ENCODE measurements at regions of chr1 and their contacts with region 1.

Region 1: DNA sequence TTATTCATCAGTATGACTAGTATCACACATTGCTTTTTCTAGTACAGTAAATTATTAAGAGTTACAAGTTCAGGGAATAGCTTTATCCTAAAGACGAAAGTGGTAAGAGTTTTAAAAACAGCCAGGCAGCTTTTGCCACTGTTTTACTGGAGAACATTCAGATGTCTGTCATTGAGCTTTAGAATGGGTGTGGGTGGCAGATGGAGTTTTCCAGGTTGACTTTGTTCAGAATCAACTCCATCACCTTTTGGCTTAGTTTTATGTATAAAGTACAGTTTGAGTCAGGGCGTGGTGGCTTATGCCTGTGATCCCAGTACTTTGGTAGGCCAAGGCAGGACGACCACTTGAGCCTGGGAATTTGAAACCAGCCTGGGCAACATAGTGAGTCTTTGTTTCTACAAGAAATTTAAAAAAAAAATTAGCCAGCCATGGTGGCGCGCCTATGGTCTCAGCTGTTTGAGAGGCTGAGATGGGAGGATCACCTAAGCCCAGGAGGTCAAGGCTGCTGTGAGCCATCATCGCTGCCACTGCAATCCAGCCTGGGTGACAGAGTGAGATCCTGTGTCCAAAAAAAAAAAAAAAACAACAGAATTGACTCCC is 29.9 kb upstream of the PLEKHM2 start:
- DNase-seq: no peak
- ATAC-seq: no peak
- H3K4me3 ChIP-seq: no peak overlapping the region
- H3K27ac ChIP-seq: no peak overlapping the region
- H3K4me1 ChIP-seq: no peaks in the 10 kb centered on the region
- H3K27me3 ChIP-seq: no peaks in the 10 kb centered on the region
- CTCF ChIP-seq: no peak
- EP300 ChIP-seq: no peak
- POLR2A ChIP-seq: no peak
- RAD21 ChIP-seq: no peak

Region 2: DNA sequence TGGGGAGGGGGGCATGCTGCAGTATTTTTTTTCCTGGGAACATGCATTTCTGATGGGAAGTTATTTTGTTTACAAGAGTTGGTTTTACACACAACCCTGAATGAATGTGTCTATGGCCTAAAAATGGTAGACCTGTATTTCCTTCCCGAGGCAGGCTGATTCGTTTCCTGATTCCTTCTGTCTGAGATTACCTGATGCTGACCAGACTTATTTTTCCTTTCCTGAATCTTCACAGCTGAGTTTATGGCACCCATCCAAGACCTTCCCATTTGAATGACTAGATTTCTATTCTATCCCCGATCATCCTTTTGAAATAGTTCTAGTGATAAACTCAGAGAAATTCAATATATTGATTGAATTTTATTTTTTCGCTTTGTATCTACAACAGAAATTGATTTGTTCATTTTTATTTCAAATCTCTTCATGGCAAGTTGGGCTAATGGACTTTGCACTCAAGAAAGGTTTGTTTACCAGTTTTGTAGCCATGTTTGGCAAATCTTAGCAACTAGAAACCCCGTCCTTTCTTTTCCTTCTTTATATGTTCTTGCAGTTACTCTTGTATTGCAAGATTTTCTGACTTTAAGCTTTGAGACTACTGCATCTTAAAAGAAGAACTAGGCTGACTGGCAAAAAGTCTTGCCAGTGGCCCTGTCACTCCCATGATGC is 14.0 kb after region 1 on chr1:
- CTCF ChIA-PET with region 1: no interaction called
- POLR2A ChIA-PET with region 1: interaction called, 22 read pairs
- in situ Hi-C with region 1: no loop called
- intact Hi-C with region 1: no loop called
- DNase-seq: no peak
- ATAC-seq: no peak
- H3K4me3 ChIP-seq: no peak overlapping the region
- H3K27ac ChIP-seq: no peak overlapping the region
- H3K4me1 ChIP-seq: no peaks in the 10 kb centered on the region; a peak in 2 of 5 replicates
- H3K27me3 ChIP-seq: no peaks in the 10 kb centered on the region
- CTCF ChIP-seq: no peak
- EP300 ChIP-seq: no peak
- POLR2A ChIP-seq: no peak
- RAD21 ChIP-seq: no peak